T-cell (primary cell): ENCODE measurements at regions of chr18 and their contacts with region 1.

Region 1: GRCh38 chr18:48951448-48952286 is 902 bp upstream of the SMAD7 start:
- DNase-seq: peak in 34 of 35 experiments; percentile 41 to 89 (median 65)
- ATAC-seq: peak; percentile 46 to 58 (median 56)
- H3K4me3 ChIP-seq: peak overlapping the region; percentile 85 to 93
- H3K4me3 Mint-ChIP-seq: peak overlapping the region; percentile 85 to 97 (median 89)
- H3K27ac ChIP-seq: peak overlapping the region; percentile 96
- H3K27ac Mint-ChIP-seq: peak overlapping the region; percentile 97 to 99
- H3K4me1 ChIP-seq: peaks cover 13 to 52% of the 10 kb centered on the region in 2 experiments
- H3K4me1 Mint-ChIP-seq: peaks cover 44 to 53% (median 47%) of the 10 kb centered on the region in 3 donors
- H3K27me3 ChIP-seq: peaks cover 0 to 7% of the 10 kb centered on the region in 2 experiments
- H3K27me3 Mint-ChIP-seq: no peaks in the 10 kb centered on the region

Region 2: DNA sequence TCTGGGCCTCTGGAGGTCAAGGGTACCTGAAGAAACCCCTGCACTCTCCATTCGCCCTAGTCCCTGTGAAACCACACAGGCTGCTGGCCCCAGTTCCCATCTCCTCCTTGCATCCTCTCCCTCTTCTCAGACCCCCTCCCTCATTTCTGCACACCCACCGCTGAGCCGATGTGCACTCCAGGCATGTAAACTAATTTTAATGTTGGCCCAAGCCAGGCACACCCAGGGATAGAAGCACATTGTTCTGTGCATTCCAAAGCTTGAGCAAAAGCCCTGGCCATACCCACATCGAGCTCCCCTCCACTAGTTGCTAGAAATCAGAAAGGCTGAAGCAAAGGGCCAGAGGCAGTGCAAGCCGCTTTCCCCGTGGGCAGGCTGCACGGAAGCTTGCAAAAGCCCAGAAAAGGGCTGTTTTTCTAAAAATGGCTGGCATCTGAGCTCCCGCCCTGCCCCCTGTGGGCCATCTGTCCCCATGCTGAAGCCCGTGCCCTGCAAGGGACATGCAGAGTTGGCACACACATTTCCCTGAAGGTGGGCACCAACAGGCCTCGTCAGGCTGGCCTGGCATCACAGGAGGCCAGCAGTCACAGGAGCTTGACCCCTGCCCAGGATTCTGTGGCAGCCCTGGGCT is 182.5 kb before region 1 on chr18:
- CTCF ChIA-PET with region 1: no interaction called
- POLR2A ChIA-PET with region 1: no interaction called
- DNase-seq: no peak
- ATAC-seq: no peak
- H3K4me3 ChIP-seq: no peak overlapping the region
- H3K4me3 Mint-ChIP-seq: no peak overlapping the region
- H3K27ac ChIP-seq: no peak overlapping the region
- H3K27ac Mint-ChIP-seq: no peak overlapping the region
- H3K4me1 ChIP-seq: peaks cover 0 to 4% of the 10 kb centered on the region in 2 experiments
- H3K4me1 Mint-ChIP-seq: peaks cover 0 to 10% (median 9%) of the 10 kb centered on the region in 3 donors
- H3K27me3 ChIP-seq: peaks cover 0 to 5% of the 10 kb centered on the region in 2 experiments
- H3K27me3 Mint-ChIP-seq: peaks cover 0 to 2% of the 10 kb centered on the region in 2 donors

Region 3: DNA sequence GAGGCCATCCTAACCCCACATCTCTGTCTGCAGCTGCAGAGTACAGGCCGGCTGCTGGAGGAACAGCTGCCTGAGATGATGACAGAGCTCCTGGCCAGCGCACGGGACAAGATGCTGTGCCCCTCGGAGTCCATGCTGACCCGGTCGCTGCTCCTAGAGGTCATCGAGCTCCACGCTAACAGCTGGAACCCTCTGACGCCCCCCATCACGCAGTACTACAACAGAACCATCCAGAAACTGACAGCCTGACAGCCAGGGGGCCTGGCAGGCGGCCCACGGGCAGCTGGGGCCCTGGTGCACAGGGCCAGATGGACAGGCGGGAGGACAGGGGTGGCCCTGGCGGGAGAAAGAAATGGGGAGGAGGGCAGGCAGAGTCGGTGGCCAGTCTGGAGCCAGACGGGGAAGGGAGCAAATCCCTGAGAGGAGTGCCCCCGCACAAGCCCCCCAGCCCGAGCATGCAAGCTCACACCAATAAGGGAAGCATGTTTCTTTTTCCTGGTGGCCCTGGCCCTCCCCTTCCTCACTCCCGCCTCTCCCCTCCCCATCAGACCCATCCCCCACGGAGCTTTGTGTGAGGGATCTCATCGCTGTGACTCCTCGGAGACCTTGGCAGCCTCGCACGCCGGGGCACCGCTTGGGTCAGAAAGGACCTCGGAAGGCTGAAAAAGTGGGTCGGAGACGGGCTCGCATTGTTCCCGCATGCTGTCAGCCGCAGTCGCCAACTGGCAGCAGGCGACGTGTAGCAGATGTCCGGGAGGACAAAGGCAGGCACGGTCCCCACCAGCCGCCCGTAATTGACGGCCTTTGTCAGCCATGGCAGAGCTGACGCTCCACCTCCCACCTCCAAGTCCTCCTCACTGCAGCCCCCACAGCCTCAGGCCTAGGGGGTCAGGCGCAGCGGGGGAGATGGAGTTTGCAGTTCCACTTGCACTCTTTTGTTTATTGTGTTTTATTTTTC is 92.1 kb before region 1 on chr18:
- CTCF ChIA-PET with region 1: no interaction called
- POLR2A ChIA-PET with region 1: interaction called in 1 of 2 experiments, 10 read pairs
- DNase-seq: no peak
- ATAC-seq: no peak
- H3K4me3 ChIP-seq: no peak overlapping the region
- H3K4me3 Mint-ChIP-seq: no peak overlapping the region
- H3K27ac ChIP-seq: no peak overlapping the region
- H3K27ac Mint-ChIP-seq: no peak overlapping the region
- H3K4me1 ChIP-seq: peaks cover 3 to 13% of the 10 kb centered on the region in 2 experiments
- H3K4me1 Mint-ChIP-seq: peaks cover 15 to 21% (median 20%) of the 10 kb centered on the region in 3 donors
- H3K27me3 ChIP-seq: no peaks in the 10 kb centered on the region
- H3K27me3 Mint-ChIP-seq: no peaks in the 10 kb centered on the region

Region 4: GRCh38 chr18:48934723-48935432 is 16.8 kb before region 1 on chr18:
- CTCF ChIA-PET with region 1: interaction called, 9 to 11 read pairs
- POLR2A ChIA-PET with region 1: interaction called, 5 to 22 read pairs
- DNase-seq: peak in 1 of 35 experiments; percentile 50
- ATAC-seq: peak in 1 of 4 experiments; percentile 5
- H3K4me3 ChIP-seq: peak overlapping the region; percentile 6 to 19
- H3K4me3 Mint-ChIP-seq: peak overlapping the region; percentile 57 to 73 (median 68)
- H3K27ac ChIP-seq: peak overlapping the region; percentile 59
- H3K27ac Mint-ChIP-seq: peak overlapping the region; percentile 66 to 76
- H3K4me1 ChIP-seq: peaks cover 54 to 95% of the 10 kb centered on the region in 2 experiments
- H3K4me1 Mint-ChIP-seq: peaks cover 93 to 97% (median 94%) of the 10 kb centered on the region in 3 donors
- H3K27me3 ChIP-seq: no peaks in the 10 kb centered on the region
- H3K27me3 Mint-ChIP-seq: no peaks in the 10 kb centered on the region

Region 5: GRCh38 chr18:48975649-48976204 is 24.1 kb after region 1 on chr18:
- CTCF ChIA-PET with region 1: interaction called in 1 of 2 experiments, 4 read pairs
- POLR2A ChIA-PET with region 1: interaction called in 1 of 2 experiments, 10 read pairs
- DNase-seq: peak in 27 of 35 experiments; percentile 13 to 70 (median 32)
- ATAC-seq: peak; percentile 84 to 86 (median 84)
- H3K4me3 ChIP-seq: peak overlapping the region; percentile 48 to 75
- H3K4me3 Mint-ChIP-seq: peak overlapping the region in 2 of 3 donors; percentile 24 to 57
- H3K27ac ChIP-seq: no peak overlapping the region
- H3K27ac Mint-ChIP-seq: no peak overlapping the region
- H3K4me1 ChIP-seq: peaks cover 3 to 14% of the 10 kb centered on the region in 2 experiments
- H3K4me1 Mint-ChIP-seq: peaks cover 12 to 18% (median 12%) of the 10 kb centered on the region in 3 donors
- H3K27me3 ChIP-seq: peaks cover 0 to 38% of the 10 kb centered on the region in 2 experiments
- H3K27me3 Mint-ChIP-seq: peaks cover 13 to 25% of the 10 kb centered on the region in 2 donors